Sigmoid colon (tissue), 7 donors: ENCODE measurements at regions of chr1 and their contacts with region 1.

Region 1: DNA sequence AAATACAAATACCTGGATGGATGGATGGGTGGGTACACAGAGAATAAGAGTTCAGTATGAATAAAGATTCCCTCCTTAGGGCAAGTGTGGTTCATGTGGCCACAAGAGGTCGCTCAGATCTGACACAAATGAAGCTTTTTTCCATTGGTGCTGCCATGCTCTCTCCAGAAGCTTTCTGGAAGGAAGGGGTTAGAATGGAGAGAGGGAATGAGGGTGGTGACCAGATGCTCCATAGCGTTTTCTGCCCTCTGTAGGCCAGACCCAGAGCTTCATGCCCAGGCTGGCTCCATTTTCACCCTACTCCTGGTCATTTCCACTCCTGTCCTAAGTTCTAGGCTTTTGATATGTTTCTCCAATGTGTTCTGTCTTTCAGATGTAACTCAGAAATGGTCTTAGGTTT is 3.3 kb upstream of the FCRL6 start:
- DNase-seq: peak; percentile 75
- H3K4me3 ChIP-seq: no peak overlapping the region
- H3K27ac ChIP-seq: no peak overlapping the region
- H3K4me1 ChIP-seq: no peaks in the 10 kb centered on the region
- H3K27me3 ChIP-seq: peaks cover 0 to 1% (median 0%) of the 10 kb centered on the region in 3 donors
- CTCF ChIP-seq: peak; percentile 49 to 78 (median 73)
- EP300 ChIP-seq: no peak
- POLR2A ChIP-seq: no peak

Region 2: DNA sequence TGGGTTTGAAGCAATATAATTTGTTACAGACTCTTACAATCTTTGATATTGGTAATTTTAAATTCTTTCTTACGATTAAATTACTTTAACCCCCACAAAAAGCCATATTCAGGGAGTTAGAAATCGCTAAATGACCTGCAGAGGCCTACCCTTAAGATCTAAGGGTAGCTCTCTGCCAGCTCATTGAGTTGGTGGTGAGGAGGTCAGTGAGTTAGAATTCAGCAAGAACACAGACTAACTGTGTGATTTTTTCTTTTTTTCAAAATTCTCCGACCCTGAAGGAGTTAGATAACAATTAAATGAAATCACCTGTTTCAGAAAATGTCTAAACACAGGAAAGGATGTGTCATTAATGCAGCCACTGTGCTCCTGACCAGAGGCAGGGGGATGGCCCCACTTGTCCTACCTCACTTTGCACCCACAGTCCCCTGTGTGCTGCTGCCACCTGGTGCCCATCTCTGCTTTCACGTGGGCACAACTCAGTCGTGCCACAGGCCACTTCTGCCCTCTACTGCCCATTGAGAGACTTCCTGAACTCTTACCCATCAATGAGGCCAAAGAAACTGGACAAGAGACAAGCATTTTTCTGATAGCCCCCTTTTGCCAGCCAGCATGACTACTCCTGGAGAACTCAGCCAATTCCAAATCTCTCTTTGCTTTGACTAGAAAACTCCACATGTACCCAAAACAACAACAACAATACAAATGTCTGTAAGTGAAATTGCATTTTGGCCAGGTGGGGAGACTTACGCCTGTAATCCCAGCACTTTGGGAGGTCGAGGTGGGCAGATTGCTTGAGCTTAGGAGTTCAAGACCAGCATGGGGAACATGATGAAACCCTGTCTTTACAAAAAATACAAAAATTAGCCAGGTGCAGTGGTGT is 92.6 kb after region 1 on chr1:
- intact Hi-C with region 1: loop called (anchors 1 kb)
- DNase-seq: peak; percentile 88
- H3K4me3 ChIP-seq: no peak overlapping the region
- H3K27ac ChIP-seq: no peak overlapping the region
- H3K4me1 ChIP-seq: peaks cover 0 to 5% (median 0%) of the 10 kb centered on the region in 4 donors
- H3K27me3 ChIP-seq: no peaks in the 10 kb centered on the region
- CTCF ChIP-seq: peak; percentile 90 to 98 (median 94)
- EP300 ChIP-seq: no peak
- POLR2A ChIP-seq: no peak